ENCODE measurements at regions of chr14 and their contacts with region 1.

Region 1: DNA sequence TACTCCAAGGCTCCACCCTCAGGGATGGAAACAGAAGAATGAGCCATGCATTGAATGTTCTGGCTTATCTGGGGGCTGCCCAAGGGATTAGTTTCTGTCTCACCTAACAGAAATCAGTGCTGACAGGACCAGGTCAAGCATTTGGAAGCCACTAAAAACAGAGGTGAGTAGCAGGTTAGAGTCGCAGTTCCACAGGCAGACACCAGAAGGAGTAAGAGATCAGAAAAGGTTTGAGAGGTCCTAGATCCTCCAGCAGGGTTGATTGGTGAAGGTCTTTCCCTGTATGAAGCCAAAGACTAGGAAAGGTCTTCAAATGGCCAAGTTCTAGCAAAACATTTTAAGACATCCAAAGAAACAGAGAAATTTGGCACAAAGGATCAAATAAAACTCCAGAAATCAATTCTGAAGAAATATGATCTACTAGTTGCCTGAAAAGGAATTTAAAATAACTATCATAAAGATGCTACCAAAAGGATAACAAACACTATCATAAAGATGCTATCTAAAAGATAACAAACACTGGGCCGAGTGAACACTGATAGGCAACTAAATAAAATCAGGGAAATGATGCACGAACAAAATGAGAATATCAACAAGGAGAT is 19.5 kb upstream of the TTC9 start:
- DNase-seq: no peak
- ATAC-seq: peak; percentile 68; the same call in 1 of the 2 replicates
- H3K4me3 ChIP-seq: no peak overlapping the region
- H3K27ac ChIP-seq: no peak overlapping the region
- H3K4me1 ChIP-seq: no peaks in the 10 kb centered on the region
- H3K27me3 ChIP-seq: peaks cover 2% of the 10 kb centered on the region; the same call in 1 of the 2 replicates
- CTCF ChIP-seq: peak; percentile 71

Region 2: DNA sequence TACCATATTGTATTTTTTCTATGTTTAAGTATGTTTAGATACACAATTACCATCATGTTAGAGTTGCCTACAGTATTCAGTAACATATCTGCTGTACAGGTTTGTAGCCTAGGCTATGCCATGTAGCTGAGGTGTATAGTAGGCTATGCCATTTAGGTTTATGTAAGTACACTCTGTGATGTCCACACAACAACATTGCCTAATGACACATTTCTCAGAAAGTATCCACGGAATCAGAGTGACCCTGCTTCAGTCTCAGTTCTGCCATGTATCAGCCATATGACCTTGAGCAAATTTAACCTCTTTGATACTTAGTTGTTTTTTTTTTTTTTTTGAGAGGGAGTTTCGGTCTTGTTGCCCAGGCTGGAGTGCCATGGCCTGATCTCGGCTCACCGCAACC is 998.1 kb before region 1 on chr14:
- CTCF ChIA-PET with region 1: no interaction called
- POLR2A ChIA-PET with region 1: interaction called, 16 read pairs
- in situ Hi-C with region 1: no loop called
- intact Hi-C with region 1: no loop called
- DNase-seq: no peak
- ATAC-seq: no peak
- H3K4me3 ChIP-seq: no peak overlapping the region
- H3K27ac ChIP-seq: no peak overlapping the region
- H3K4me1 ChIP-seq: no peaks in the 10 kb centered on the region
- H3K27me3 ChIP-seq: no peaks in the 10 kb centered on the region
- CTCF ChIP-seq: no peak

Region 3: DNA sequence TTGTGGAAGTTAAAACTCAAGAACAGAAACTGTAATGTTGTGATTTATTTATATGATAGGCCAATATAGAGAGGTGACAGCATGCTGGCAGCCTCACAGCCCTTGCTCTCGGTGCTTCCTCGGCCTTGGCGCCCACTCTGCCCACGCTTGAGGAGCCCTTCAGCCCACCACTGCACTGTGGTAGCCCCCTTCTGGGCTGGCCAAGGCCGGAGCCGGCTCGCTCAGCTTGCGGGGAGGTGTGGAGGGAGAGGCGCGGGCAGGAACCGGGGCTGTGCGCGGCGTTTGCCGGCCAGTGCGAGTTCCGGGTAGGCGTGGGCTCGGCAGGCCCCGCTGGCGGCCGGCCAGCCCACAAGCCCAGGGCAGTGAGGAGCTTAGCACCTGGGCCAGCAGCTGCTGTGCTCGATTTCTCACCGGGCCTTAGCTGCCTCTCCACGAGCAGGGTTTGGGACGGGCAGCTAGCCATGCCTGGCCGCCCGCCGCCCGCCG is 367.7 kb before region 1 on chr14:
- CTCF ChIA-PET with region 1: no interaction called
- POLR2A ChIA-PET with region 1: no interaction called
- in situ Hi-C with region 1: no loop called
- intact Hi-C with region 1: no loop called
- DNase-seq: no peak
- ATAC-seq: peak; percentile 87
- H3K4me3 ChIP-seq: peak overlapping the region; percentile 37 to 42
- H3K27ac ChIP-seq: no peak overlapping the region
- H3K4me1 ChIP-seq: no peaks in the 10 kb centered on the region
- H3K27me3 ChIP-seq: 0 out of 2 replicates have a peak, but pooled peaks cover 6% of the 10 kb centered on the region
- CTCF ChIP-seq: no peak

Region 4: DNA sequence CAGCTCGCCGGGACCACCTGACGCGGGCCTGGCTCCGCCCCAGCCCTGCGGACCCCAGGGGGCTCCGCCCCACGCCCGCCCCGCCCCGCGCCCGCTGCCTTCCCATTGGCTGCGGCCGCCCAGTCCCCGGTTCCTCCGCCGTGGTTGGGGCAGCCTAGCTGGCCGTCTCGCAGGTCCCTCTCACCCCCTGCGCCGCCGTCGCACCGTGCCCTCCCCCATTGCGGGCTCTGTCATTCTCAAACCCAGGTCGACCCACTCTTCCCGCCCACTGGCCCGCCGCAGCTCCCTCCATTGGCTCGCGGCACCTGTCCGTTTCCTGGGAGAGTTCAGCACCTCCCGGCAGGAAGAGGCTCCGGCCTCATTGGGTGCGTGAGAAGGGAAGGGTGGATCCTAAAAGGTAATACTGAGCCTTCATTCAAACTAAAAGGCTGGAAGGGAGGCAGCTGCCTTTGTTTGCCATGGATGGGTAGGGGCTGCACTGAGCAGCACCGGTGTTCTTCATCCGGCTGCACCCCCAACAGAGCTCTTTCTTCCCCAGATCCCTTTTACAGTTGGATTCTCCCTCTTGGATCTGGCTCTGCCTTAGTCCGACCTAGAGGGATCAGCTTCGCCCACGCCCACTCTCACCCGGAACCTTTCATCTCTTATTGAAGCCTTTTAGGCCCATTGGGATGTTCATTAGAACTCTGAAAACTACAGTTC is 187.5 kb after region 1 on chr14:
- CTCF ChIA-PET with region 1: no interaction called
- POLR2A ChIA-PET with region 1: no interaction called
- in situ Hi-C with region 1: no loop called
- intact Hi-C with region 1: loop called (anchors 5 kb)
- DNase-seq: peak; percentile 74
- ATAC-seq: peak; percentile 95
- H3K4me3 ChIP-seq: peak overlapping the region; percentile 83 to 89
- H3K27ac ChIP-seq: peak overlapping the region; percentile 84
- H3K4me1 ChIP-seq: peaks cover 15% of the 10 kb centered on the region
- H3K27me3 ChIP-seq: no peaks in the 10 kb centered on the region
- CTCF ChIP-seq: no peak

Region 5: DNA sequence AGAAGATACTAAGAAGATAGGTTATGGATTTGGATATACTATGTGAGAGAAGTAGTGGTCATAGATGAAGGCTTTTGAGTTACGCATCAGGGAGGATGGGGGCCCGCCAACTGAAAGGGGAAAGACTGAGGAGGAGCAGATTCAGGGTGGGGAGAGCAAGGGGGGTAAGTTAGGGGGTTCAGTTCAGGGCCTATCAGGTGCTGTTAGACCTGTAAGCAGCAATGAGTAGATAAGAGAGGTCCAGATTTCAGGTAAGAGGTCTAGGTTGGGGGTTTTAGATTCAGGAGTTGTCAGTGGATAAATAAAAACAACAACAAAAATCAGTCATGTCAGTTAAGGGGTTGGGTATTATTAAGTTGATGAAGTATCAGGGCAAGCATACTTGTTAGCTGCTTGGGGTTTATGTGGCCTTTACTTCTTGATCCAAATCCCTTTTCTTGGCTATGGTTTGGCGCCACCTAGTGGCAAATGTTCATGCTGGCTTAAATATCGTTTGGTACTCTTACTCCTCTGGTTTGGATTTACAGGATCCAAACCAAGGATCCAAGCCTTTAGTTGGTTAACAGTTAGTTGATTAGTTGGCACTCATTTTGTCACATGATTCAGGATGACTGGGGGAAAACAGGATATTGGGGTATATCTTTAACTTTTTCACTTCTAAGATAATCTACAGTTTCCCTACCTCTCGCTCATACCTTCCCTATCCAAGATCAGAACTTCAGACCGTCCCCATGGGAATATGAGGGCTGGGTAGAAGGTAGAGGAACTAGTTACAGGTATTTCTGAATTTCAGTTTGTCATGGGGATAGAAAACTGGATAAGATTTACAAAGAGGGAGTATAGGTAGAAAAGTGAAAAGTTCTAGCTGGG is 350.1 kb after region 1 on chr14:
- CTCF ChIA-PET with region 1: no interaction called
- POLR2A ChIA-PET with region 1: no interaction called
- in situ Hi-C with region 1: no loop called
- intact Hi-C with region 1: loop called (anchors 5 kb)
- DNase-seq: peak; percentile 62
- ATAC-seq: peak; percentile 89
- H3K4me3 ChIP-seq: no peak overlapping the region
- H3K27ac ChIP-seq: no peak overlapping the region
- H3K4me1 ChIP-seq: no peaks in the 10 kb centered on the region
- H3K27me3 ChIP-seq: no peaks in the 10 kb centered on the region
- CTCF ChIP-seq: peak; percentile 81